Heart right ventricle (tissue), 16 donors: ENCODE measurements at regions of chr2 and their contacts with region 1.

Region 1: GRCh38 chr2:39379643-39380524 is 57.2 kb downstream of the MAP4K3 start:
- DNase-seq: peak in 1 of 2 donors; percentile 53
- ATAC-seq: peak; percentile 62 to 89 (median 80)
- H3K4me3 ChIP-seq: no peak overlapping the region
- H3K27ac ChIP-seq: peak overlapping the region; percentile 28 to 73 (median 59)
- H3K4me1 ChIP-seq: peaks cover 2 to 68% (median 53%) of the 10 kb centered on the region in 9 donors
- H3K27me3 ChIP-seq: no peaks in the 10 kb centered on the region
- CTCF ChIP-seq: peak; percentile 30 to 83 (median 66)

Region 2: DNA sequence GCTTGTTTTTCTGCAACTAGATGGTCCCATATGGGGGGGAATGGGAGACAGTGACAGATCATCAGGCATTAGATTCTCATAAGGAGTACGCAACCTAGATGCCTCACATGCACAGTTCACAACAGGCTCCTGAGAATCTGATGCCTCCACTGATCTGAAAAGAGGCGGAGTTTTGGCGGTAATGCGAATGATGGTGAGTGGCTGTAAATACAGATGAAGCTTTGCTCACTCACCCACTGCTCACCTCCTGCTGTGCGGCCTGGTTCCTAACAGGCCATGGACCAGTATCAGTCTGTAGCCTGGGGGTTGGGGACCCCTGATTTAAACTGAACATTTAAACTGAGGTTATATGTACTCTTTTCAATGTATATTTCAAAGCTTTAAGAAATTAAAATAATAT is 299.7 kb before region 1 on chr2:
- intact Hi-C with region 1: no loop called
- DNase-seq: no peak
- ATAC-seq: no peak
- H3K4me3 ChIP-seq: no peak overlapping the region
- H3K27ac ChIP-seq: no peak overlapping the region
- H3K4me1 ChIP-seq: peaks cover 0 to 24% (median 14%) of the 10 kb centered on the region in 9 donors
- H3K27me3 ChIP-seq: no peaks in the 10 kb centered on the region
- CTCF ChIP-seq: no peak

Region 3: GRCh38 chr2:39217192-39217550 is 162.7 kb before region 1 on chr2:
- intact Hi-C with region 1: no loop called
- DNase-seq: no peak
- ATAC-seq: no peak
- H3K4me3 ChIP-seq: no peak overlapping the region
- H3K27ac ChIP-seq: peak overlapping the region in 1 of 10 donors; percentile 51
- H3K4me1 ChIP-seq: peaks cover 0 to 12% (median 0%) of the 10 kb centered on the region in 9 donors
- H3K27me3 ChIP-seq: no peaks in the 10 kb centered on the region
- CTCF ChIP-seq: no peak

Region 4: DNA sequence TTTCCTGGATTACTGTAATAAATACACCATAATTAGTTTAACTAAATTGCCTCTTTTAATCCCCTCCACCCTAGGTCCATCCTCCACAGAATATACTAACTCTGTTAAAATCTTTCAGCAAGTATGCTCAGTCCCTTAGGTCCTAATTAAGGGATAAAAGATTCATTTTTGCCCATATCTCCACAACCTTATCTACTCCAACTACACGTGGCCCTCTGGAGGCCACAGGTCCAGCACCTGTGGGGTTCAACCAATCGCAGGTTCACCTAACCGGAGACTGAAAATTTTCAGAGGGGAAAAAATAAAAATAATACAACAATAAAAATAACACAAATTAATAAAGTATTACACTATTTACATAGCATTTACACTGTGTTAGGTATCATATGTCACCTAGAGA is 29.2 kb before region 1 on chr2:
- intact Hi-C with region 1: no loop called
- DNase-seq: no peak
- ATAC-seq: no peak
- H3K4me3 ChIP-seq: no peak overlapping the region
- H3K27ac ChIP-seq: no peak overlapping the region
- H3K4me1 ChIP-seq: peaks cover 0 to 52% (median 26%) of the 10 kb centered on the region in 9 donors
- H3K27me3 ChIP-seq: no peaks in the 10 kb centered on the region
- CTCF ChIP-seq: no peak

Region 5: GRCh38 chr2:39436592-39437510 is 57.0 kb after region 1 on chr2 and contains the start of gene MAP4K3:
- intact Hi-C with region 1: loop called in 8 of 10 experiments (anchors 2 to 10 kb)
- DNase-seq: peak; percentile 93 to 96
- ATAC-seq: peak; percentile 92 to 95 (median 94)
- H3K4me3 ChIP-seq: peak within 1 kb of the TSS; percentile 65 to 97 (median 92)
- H3K27ac ChIP-seq: peak within 1 kb of the TSS; percentile 90 to 99 (median 98)
- H3K4me1 ChIP-seq: peaks cover 5 to 71% (median 55%) of the 10 kb centered on the region in 9 donors
- H3K27me3 ChIP-seq: no peaks in the 10 kb centered on the region
- CTCF ChIP-seq: no peak
- total RNA-seq, gene MAP4K3: 27.6 to 49.0 (median 40.2) TPM

Region 6: GRCh38 chr2:39492095-39492590 is 112.3 kb after region 1 on chr2:
- intact Hi-C with region 1: loop called in 1 of 10 experiments (anchors 5 kb)
- DNase-seq: no peak
- ATAC-seq: peak; percentile 37 to 92 (median 73)
- H3K4me3 ChIP-seq: no peak overlapping the region
- H3K27ac ChIP-seq: peak overlapping the region in 9 of 10 donors; percentile 11 to 85 (median 64)
- H3K4me1 ChIP-seq: peaks cover 0 to 62% (median 27%) of the 10 kb centered on the region in 9 donors
- H3K27me3 ChIP-seq: no peaks in the 10 kb centered on the region
- CTCF ChIP-seq: no peak

Region 7: GRCh38 chr2:39504790-39505335 is 125.0 kb after region 1 on chr2:
- intact Hi-C with region 1: loop called in 5 of 10 experiments (anchors 5 to 10 kb)
- DNase-seq: no peak
- ATAC-seq: peak in 7 of 8 donors; percentile 31 to 68 (median 48)
- H3K4me3 ChIP-seq: peak overlapping the region in 3 of 10 donors; percentile 2 to 13 (median 3)
- H3K27ac ChIP-seq: peak overlapping the region in 9 of 10 donors; percentile 29 to 86 (median 72)
- H3K4me1 ChIP-seq: peaks cover 2 to 64% (median 48%) of the 10 kb centered on the region in 9 donors
- H3K27me3 ChIP-seq: no peaks in the 10 kb centered on the region
- CTCF ChIP-seq: no peak

Region 8: DNA sequence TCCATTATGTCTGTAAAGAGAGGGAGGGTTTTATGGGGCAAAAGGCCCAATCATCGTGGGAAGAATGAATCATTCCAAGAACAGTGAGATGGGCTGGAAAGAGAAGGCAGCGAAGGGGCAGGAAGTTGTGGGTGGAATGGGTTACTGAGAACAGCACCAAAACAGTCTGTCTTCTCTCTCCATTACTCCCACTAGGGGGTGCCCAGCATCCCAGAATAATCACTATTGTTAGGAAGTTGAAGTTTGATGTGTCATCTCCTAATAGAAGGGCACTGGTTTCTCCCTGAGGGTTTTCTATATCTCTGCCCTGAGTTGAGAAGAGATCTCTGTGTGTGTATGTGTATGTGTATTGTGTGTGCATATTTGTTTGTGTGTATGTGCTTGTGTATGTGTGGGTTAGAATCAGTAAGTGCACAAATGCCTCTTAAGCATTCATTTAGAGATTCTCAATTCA is 133.8 kb after region 1 on chr2:
- intact Hi-C with region 1: loop called in 7 of 10 experiments (anchors 2 to 10 kb)
- DNase-seq: peak in 1 of 2 donors; percentile 86
- ATAC-seq: peak; percentile 39 to 79 (median 58)
- H3K4me3 ChIP-seq: no peak overlapping the region
- H3K27ac ChIP-seq: peak overlapping the region; percentile 6 to 90 (median 77)
- H3K4me1 ChIP-seq: peaks cover 30 to 100% (median 93%) of the 10 kb centered on the region in 9 donors
- H3K27me3 ChIP-seq: no peaks in the 10 kb centered on the region
- CTCF ChIP-seq: peak; percentile 24 to 80 (median 69)

Region 9: DNA sequence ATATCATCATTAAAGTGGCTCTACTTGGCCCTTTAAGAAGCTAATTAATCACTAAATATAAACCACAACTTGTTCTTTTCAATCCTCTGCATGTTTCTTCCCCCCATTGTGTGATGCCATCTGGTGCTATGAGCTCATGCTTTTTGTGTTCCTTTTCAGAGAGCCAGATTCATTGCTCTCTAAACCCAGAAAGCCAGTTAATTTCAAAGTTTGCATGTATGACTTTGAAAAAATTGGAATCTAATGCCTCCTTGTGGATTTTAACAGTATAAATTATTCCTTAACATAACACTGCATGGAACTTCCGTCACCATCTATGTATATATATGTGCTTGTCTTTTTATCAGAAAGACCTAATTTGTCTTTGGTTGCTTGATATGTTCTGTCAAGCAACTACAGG is 317.0 kb after region 1 on chr2:
- intact Hi-C with region 1: loop called in 8 of 10 experiments (anchors 1 to 10 kb)
- DNase-seq: peak in 1 of 2 donors; percentile 12
- ATAC-seq: peak; percentile 44 to 86 (median 73)
- H3K4me3 ChIP-seq: no peak overlapping the region
- H3K27ac ChIP-seq: peak overlapping the region in 8 of 10 donors; percentile 37 to 75 (median 56)
- H3K4me1 ChIP-seq: peaks cover 0 to 34% (median 22%) of the 10 kb centered on the region in 9 donors
- H3K27me3 ChIP-seq: no peaks in the 10 kb centered on the region
- CTCF ChIP-seq: peak; percentile 16 to 72 (median 53)

Region 10: GRCh38 chr2:39728941-39729351 is 349.1 kb after region 1 on chr2:
- intact Hi-C with region 1: loop called in 2 of 10 experiments (anchors 10 kb)
- DNase-seq: peak in 1 of 2 donors; percentile 23
- ATAC-seq: peak in 5 of 8 donors; percentile 43 to 56 (median 46)
- H3K4me3 ChIP-seq: no peak overlapping the region
- H3K27ac ChIP-seq: no peak overlapping the region
- H3K4me1 ChIP-seq: peaks cover 0 to 19% (median 0%) of the 10 kb centered on the region in 9 donors
- H3K27me3 ChIP-seq: no peaks in the 10 kb centered on the region
- CTCF ChIP-seq: peak in 8 of 9 donors; percentile 29 to 72 (median 66)